ENCODE measurements at regions of chr6 and their contacts with region 1.

Region 1: DNA sequence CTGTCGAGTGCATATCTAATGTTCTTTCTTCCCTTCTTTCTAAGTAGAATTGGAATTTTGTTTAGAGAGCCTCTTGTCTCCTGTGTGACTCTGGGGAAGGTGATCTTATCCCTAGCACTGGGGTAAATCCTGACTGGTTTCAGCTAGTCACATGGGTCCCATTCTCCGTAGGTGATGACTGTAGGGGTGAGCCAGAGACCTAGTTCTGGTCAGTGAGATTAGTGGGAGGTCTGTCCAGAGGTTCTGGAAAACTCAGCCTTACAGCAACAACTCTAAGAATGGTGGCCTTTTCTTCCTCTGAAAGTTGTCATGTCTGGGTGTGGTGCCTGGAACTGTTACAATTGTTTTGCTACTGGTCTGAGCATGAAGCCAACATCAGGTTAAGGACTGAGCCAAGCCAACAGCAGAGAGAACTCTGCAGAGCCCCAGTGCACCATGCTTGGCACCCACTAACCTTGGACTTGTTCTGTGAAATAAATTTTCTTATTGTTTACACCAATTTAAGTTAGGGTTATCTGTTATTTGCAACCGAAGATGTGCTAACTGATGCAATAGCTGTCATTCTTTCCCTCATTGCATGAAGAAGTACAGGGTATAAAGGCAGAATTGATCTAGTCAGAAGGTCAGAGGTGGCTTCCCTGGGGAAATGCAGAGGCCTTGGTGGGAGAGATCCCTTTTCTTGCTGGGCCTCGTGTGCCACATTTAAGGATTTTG is 56.8 kb upstream of the TULP4 start:
- DNase-seq: no peak
- ATAC-seq: no peak
- H3K4me3 ChIP-seq: no peak overlapping the region
- H3K4me3 Mint-ChIP-seq: no peak overlapping the region
- H3K27ac ChIP-seq: no peak overlapping the region
- H3K27ac Mint-ChIP-seq: peak overlapping the region; percentile 53
- H3K4me1 ChIP-seq: peaks cover 26% of the 10 kb centered on the region
- H3K4me1 Mint-ChIP-seq: peaks cover 49% of the 10 kb centered on the region
- H3K27me3 ChIP-seq: no peaks in the 10 kb centered on the region
- H3K27me3 Mint-ChIP-seq: no peaks in the 10 kb centered on the region
- CTCF ChIP-seq: no peak

Region 2: GRCh38 chr6:158115508-158115907 is 139.9 kb before region 1 on chr6:
- CTCF ChIA-PET with region 1: no interaction called
- POLR2A ChIA-PET with region 1: no interaction called
- intact Hi-C with region 1: no loop called
- DNase-seq: no peak
- ATAC-seq: no peak
- H3K4me3 ChIP-seq: no peak overlapping the region
- H3K4me3 Mint-ChIP-seq: no peak overlapping the region
- H3K27ac ChIP-seq: no peak overlapping the region
- H3K27ac Mint-ChIP-seq: no peak overlapping the region
- H3K4me1 ChIP-seq: no peaks in the 10 kb centered on the region
- H3K4me1 Mint-ChIP-seq: no peaks in the 10 kb centered on the region
- H3K27me3 ChIP-seq: no peaks in the 10 kb centered on the region
- H3K27me3 Mint-ChIP-seq: no peaks in the 10 kb centered on the region
- CTCF ChIP-seq: no peak

Region 3: DNA sequence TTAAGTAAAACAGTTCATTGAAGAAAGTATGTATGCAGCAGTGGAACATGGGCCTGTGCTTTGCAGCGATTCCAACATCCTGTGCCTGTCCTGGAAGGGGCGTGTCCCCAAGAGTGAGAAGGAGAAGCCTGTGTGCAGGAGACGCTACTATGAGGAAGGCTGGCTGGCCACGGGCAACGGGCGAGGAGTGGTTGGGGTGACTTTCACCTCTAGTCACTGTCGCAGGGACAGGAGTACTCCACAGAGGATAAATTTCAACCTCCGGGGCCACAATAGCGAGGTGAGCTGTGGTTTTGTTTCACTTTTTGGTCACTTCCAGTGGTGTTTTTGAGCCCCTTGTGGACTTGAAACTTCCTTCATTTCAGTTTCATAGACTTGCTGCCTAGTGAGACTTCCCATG is 58.6 kb after region 1 on chr6:
- CTCF ChIA-PET with region 1: no interaction called
- POLR2A ChIA-PET with region 1: no interaction called
- intact Hi-C with region 1: loop called in 1 of 2 experiments (anchors 5 kb)
- DNase-seq: no peak
- ATAC-seq: no peak
- H3K4me3 ChIP-seq: no peak overlapping the region
- H3K4me3 Mint-ChIP-seq: no peak overlapping the region
- H3K27ac ChIP-seq: no peak overlapping the region
- H3K27ac Mint-ChIP-seq: no peak overlapping the region
- H3K4me1 ChIP-seq: no peaks in the 10 kb centered on the region
- H3K4me1 Mint-ChIP-seq: peaks cover 12% of the 10 kb centered on the region
- H3K27me3 ChIP-seq: no peaks in the 10 kb centered on the region
- H3K27me3 Mint-ChIP-seq: no peaks in the 10 kb centered on the region
- CTCF ChIP-seq: no peak

Region 4: GRCh38 chr6:158853072-158853871 is 597.8 kb after region 1 on chr6:
- CTCF ChIA-PET with region 1: no interaction called
- POLR2A ChIA-PET with region 1: no interaction called
- intact Hi-C with region 1: no loop called
- DNase-seq: peak; percentile 75 to 95 (median 88)
- ATAC-seq: peak; percentile 74
- H3K4me3 ChIP-seq: peak overlapping the region; percentile 7 to 52
- H3K4me3 Mint-ChIP-seq: no peak overlapping the region
- H3K27ac ChIP-seq: peak overlapping the region; percentile 77 to 98
- H3K27ac Mint-ChIP-seq: no peak overlapping the region
- H3K4me1 ChIP-seq: peaks cover 58% of the 10 kb centered on the region
- H3K4me1 Mint-ChIP-seq: peaks cover 44% of the 10 kb centered on the region
- H3K27me3 ChIP-seq: no peaks in the 10 kb centered on the region
- H3K27me3 Mint-ChIP-seq: no peaks in the 10 kb centered on the region
- CTCF ChIP-seq: no peak

Region 5: DNA sequence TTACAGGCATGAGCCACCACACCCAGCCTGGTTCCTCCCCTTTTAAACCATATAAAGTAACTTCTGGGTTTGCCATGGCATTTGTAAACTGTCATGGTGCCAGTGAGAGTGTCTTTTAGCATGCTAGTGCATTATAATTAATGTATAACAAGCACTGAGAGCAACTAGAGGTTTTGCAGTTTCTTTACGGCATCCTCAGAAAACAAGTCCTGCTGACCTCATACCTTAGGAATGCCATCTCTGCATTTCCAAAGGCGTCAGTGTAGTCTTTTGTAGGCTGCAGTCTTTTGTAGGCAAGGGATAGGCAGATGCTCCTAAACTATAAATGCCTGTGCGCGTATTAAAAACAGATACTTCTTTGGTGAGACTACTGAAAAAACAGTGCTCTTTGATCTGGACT is 638.8 kb after region 1 on chr6:
- CTCF ChIA-PET with region 1: no interaction called
- POLR2A ChIA-PET with region 1: no interaction called
- intact Hi-C with region 1: no loop called
- DNase-seq: no peak
- ATAC-seq: no peak
- H3K4me3 ChIP-seq: no peak overlapping the region
- H3K4me3 Mint-ChIP-seq: no peak overlapping the region
- H3K27ac ChIP-seq: no peak overlapping the region
- H3K27ac Mint-ChIP-seq: no peak overlapping the region
- H3K4me1 ChIP-seq: no peaks in the 10 kb centered on the region
- H3K4me1 Mint-ChIP-seq: no peaks in the 10 kb centered on the region
- H3K27me3 ChIP-seq: no peaks in the 10 kb centered on the region
- H3K27me3 Mint-ChIP-seq: no peaks in the 10 kb centered on the region
- CTCF ChIP-seq: no peak